AG04450 (cell line): ENCODE measurements at regions of chr9 and their contacts with region 1.

Region 1: GRCh38 chr9:21491742-21492141 is 9.6 kb upstream of the IFNE start:
- DNase-seq: no peak
- H3K4me3 ChIP-seq: no peak overlapping the region
- H3K27ac ChIP-seq: no peak overlapping the region
- H3K27me3 ChIP-seq: no peaks in the 10 kb centered on the region
- CTCF ChIP-seq: peak; percentile 22; the same call in 1 of the 2 replicates

Region 2: DNA sequence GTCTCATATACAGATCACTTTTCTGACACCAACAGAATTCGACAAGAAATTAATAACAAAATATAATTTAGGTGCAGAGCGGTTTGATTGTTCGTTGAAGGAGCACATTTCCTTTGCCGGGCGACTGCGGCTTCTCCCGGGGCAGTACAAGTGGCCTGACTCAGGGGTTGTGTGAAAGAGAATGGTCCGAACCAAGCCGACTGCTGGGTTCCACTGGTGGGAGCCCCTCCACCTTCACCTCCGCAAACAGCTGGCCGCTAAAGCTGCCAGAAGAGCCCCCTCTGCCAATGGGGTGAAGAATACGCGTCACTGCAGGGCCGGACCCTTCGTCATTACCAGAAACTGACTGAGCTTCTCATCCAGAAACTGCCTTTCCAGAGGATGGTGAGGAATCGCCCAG is 146.4 kb after region 1 on chr9:
- CTCF ChIA-PET with region 1: interaction called, 10 read pairs
- POLR2A ChIA-PET with region 1: no interaction called
- DNase-seq: no peak
- H3K4me3 ChIP-seq: no peak overlapping the region
- H3K27ac ChIP-seq: no peak overlapping the region
- H3K27me3 ChIP-seq: no peaks in the 10 kb centered on the region
- CTCF ChIP-seq: no peak